ENCODE measurements at regions of chr19 and their contacts with region 1.

Region 1: GRCh38 chr19:5031231-5032100 is 62.6 kb downstream of the KDM4B start:
- DNase-seq: peak; percentile 96
- ATAC-seq: peak; percentile 88
- H3K4me3 Mint-ChIP-seq: no peak overlapping the region
- H3K27ac Mint-ChIP-seq: no peak overlapping the region
- H3K4me1 Mint-ChIP-seq: peaks cover 2% of the 10 kb centered on the region; the same call in 1 of the 2 replicates
- H3K27me3 Mint-ChIP-seq: no peaks in the 10 kb centered on the region
- CTCF ChIP-seq: peak; percentile 91

Region 2: DNA sequence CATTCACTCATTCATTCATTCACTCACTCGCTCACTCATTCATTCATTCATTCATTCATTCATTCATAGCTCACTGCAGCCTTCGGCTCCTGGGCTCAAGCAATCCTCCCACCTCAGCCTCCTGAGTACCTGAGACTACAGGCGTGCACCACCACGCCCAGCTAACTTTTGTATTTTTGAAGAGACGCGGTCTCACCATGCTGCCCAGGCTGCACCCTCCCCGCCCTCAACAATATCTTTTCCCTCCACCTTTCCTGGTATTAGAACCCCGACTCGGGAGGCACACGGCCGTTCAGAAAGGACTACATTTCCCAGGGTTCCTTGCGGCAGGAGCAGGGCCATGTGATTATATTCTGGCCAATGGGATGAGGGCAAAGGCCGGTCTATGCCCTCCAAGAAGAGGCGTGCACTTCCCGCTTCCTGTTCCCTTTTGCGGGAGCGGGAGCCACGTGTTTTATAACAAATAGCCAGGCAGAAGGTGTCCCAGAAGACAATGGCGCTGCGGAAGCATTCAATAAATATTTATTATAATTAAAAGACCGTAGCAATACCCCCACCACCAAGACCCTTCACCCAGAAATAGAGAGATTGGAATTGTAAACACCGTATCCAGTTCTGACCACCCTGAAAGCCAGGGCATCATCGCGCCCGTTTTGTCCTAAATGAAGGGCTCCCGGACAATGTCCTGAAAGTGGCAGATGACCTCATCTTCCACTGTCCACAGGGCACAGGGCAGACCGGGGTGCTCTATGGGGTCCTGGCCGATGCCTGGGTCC is 215.9 kb before region 1 on chr19:
- CTCF ChIA-PET with region 1: interaction called, 49 read pairs
- POLR2A ChIA-PET with region 1: no interaction called
- DNase-seq: peak; percentile 86
- ATAC-seq: peak; percentile 82
- H3K4me3 Mint-ChIP-seq: peak overlapping the region; percentile 58
- H3K27ac Mint-ChIP-seq: no peak overlapping the region
- H3K4me1 Mint-ChIP-seq: peaks cover 2% of the 10 kb centered on the region; the same call in 1 of the 2 replicates
- H3K27me3 Mint-ChIP-seq: peaks cover 25% of the 10 kb centered on the region
- CTCF ChIP-seq: no peak

Region 3: DNA sequence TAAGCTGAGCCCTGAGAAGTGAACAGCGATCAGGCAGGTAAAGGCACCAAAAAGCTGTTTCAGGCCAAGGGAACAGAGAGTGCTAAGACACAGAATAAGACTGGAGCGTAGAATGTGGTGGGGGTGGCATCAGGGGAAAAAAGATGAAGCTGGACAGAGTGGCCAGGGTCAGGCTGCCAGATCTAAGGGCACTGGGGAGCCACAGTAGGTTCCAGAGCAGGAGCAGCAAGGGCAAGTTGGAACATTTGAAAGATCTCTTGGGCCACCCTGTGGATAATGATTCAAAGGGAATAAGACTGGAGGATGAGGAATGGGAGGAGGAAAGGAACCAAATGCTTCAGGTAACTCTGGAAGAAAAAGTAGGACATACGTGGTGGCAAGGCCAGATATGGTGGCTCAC is 157.5 kb before region 1 on chr19:
- CTCF ChIA-PET with region 1: interaction called, 11 read pairs
- POLR2A ChIA-PET with region 1: no interaction called
- DNase-seq: no peak
- ATAC-seq: no peak
- H3K4me3 Mint-ChIP-seq: no peak overlapping the region
- H3K27ac Mint-ChIP-seq: peak overlapping the region; percentile 26; the same call in 1 of the 2 replicates
- H3K4me1 Mint-ChIP-seq: peaks cover 9% of the 10 kb centered on the region; the same call in 1 of the 2 replicates
- H3K27me3 Mint-ChIP-seq: no peaks in the 10 kb centered on the region; the same call in 1 of the 2 replicates
- CTCF ChIP-seq: no peak

Region 4: GRCh38 chr19:4933528-4933927 is 97.9 kb before region 1 on chr19:
- CTCF ChIA-PET with region 1: interaction called, 18 read pairs
- POLR2A ChIA-PET with region 1: no interaction called
- DNase-seq: no peak
- ATAC-seq: no peak
- H3K4me3 Mint-ChIP-seq: no peak overlapping the region
- H3K27ac Mint-ChIP-seq: no peak overlapping the region
- H3K4me1 Mint-ChIP-seq: no peaks in the 10 kb centered on the region
- H3K27me3 Mint-ChIP-seq: no peaks in the 10 kb centered on the region
- CTCF ChIP-seq: no peak

Region 5: DNA sequence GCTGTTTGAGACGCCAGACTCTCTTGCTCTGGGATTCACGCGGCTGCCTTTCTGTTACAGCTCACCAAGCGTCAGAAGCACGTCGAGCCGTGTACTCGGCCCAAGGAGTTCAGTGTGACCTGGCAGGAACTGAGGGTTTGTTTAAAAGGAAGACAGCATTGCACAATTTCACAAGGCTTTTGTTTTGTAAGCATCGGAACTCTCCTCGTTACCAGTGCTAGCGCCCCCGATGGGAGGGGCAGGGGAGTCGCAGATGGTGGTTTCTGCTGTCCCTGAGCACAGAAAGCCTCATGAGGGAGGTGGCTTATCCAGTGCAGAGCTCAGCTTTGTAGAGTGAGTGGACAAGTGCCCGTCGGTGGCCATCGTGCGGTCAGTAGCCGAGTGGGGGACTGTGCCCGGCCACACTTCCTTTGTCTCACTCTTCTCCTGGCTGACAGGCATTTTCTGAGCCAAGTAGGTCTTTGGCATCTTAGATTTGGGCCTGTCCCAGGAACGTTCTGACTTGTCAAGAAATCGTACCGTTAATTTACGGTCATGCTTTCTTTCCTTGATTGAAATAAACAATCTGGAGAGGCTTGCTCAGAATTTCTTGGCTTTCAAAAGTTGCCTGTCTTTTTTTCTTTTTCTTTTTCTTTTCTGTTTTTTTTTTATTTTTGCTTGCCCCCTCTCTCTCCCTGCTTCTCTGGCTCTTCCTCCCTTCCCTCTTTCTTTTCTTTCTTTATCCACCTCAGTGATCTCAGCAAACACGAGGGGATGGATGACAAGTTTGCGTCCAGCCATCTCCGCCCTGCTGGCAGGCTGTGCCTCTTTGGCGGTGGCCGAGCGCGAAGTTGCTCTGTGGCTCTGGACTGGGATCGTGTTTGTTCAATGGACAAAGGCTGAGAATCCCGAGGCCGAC is 54.8 kb before region 1 on chr19:
- CTCF ChIA-PET with region 1: interaction called, 23 read pairs
- POLR2A ChIA-PET with region 1: no interaction called
- DNase-seq: peak; percentile 65
- ATAC-seq: peak; percentile 78
- H3K4me3 Mint-ChIP-seq: no peak overlapping the region
- H3K27ac Mint-ChIP-seq: peak overlapping the region; percentile 96
- H3K4me1 Mint-ChIP-seq: peaks cover 32% of the 10 kb centered on the region
- H3K27me3 Mint-ChIP-seq: no peaks in the 10 kb centered on the region
- CTCF ChIP-seq: 0 out of 2 replicates have a peak, but pooled peaks have one; percentile 33

Region 6: GRCh38 chr19:5018224-5019015 is 13.0 kb before region 1 on chr19:
- CTCF ChIA-PET with region 1: interaction called, 29 read pairs
- POLR2A ChIA-PET with region 1: no interaction called
- DNase-seq: no peak
- ATAC-seq: no peak
- H3K4me3 Mint-ChIP-seq: no peak overlapping the region
- H3K27ac Mint-ChIP-seq: no peak overlapping the region; the same call in 1 of the 2 replicates
- H3K4me1 Mint-ChIP-seq: 0 out of 2 replicates have a peak, but pooled peaks cover 2% of the 10 kb centered on the region
- H3K27me3 Mint-ChIP-seq: no peaks in the 10 kb centered on the region
- CTCF ChIP-seq: no peak